Mammary epithelial cell (primary cell): ENCODE measurements at regions of chr11 and their contacts with region 1.

Region 1: GRCh38 chr11:85664615-85665481 is at the start of gene CREBZF:
- DNase-seq: peak; percentile 93
- H3K4me3 ChIP-seq: peak within 1 kb of the TSS; percentile 69 to 89 (median 88)
- H3K27ac ChIP-seq: peak within 1 kb of the TSS; percentile 93
- H3K4me1 ChIP-seq: peaks cover 2% of the 10 kb centered on the region
- H3K27me3 ChIP-seq: no peaks in the 10 kb centered on the region
- CTCF ChIP-seq: no peak
- total RNA-seq, gene CREBZF: 26.1 to 30.2 TPM

Region 2: DNA sequence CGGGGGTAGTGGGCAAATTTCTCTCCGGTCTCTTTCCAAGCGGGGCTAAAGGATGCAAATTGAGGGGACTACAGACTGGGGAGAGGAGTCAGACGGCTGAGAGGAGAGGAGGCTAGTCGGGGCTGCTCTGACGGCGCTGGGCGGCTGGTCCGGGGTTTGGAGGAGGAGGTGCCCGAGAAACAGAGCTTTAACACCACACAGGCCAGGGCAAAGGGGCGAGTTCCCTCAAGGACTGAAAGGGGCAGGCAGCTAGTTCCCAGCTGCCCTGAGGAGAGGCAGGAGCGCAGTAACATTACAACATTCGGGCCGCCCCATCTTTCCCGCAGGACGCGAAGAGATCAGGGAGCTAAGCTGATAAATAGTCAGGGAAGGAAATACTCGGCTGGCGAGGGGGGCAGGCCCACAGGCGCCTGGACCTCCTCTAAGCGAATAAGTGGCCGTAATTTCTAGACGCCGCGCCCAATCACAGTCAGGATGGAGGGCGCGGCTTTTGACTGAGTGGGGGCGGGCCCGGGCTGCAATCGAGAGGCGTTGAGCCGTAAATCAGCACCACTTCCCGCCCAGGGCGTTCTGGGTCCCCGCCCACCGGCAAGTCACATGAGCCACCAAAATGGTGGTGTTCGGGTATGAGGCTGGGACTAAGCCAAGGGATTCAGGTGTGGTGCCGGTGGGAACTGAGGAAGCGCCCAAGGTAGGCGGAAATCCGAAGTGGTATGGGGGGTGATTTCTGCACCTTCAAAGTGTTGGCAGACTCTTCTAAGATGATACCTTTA is 36.7 kb before region 1 on chr11 and contains the start of gene TMEM126B:
- CTCF ChIA-PET with region 1: no interaction called
- dilution Hi-C with region 1: no loop called
- in situ Hi-C with region 1: no loop called
- intact Hi-C with region 1: loop called (anchors 2 kb)
- DNase-seq: peak; percentile 98
- H3K4me3 ChIP-seq: peak within 1 kb of the TSS; percentile 66 to 91 (median 79)
- H3K27ac ChIP-seq: peak within 1 kb of the TSS; percentile 67
- H3K4me1 ChIP-seq: peaks cover 21% of the 10 kb centered on the region
- H3K27me3 ChIP-seq: no peaks in the 10 kb centered on the region
- CTCF ChIP-seq: no peak
- total RNA-seq, gene TMEM126B: 36.0 to 46.1 TPM

Region 3: GRCh38 chr11:85740481-85741400 is 75.9 kb after region 1 on chr11:
- CTCF ChIA-PET with region 1: no interaction called
- dilution Hi-C with region 1: no loop called
- in situ Hi-C with region 1: no loop called
- intact Hi-C with region 1: no loop called
- DNase-seq: no peak
- H3K4me3 ChIP-seq: no peak overlapping the region
- H3K27ac ChIP-seq: no peak overlapping the region
- H3K4me1 ChIP-seq: peaks cover 18% of the 10 kb centered on the region
- H3K27me3 ChIP-seq: no peaks in the 10 kb centered on the region
- CTCF ChIP-seq: no peak

Region 4: DNA sequence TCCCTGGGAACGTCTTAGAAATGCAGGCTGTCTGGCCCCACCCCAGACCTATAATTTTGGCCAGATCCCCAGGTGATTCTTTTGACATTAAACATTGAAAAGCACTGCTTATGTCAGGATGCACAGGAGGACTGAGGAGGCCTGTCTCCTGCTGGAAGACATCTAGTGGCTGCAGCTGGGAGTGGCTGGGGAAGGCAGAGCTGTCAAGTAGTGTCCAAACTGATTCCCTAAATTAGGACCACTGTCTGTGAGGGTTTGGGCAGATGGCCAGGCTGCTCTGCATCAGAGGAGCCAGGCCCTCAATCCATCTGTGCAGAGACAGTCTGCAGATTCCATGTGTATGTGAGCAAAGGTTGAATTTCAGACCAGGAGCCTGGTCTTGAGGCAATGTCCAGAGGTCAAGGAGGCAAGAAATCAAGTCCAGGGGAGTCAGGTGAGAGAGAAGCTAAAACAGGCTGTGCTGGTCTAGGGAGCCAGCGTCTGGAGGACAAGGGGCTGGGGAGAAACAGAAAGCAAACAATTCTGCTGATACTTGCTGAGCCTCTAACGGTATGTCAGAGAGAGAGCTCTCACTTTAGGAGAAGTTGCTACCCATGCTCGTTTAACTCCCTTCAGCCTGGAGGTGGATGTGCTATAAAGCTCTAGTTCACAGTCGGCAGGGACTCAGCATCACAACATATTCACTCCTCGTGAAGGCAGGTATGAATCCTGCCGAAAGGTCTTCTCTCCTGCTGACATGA is 161.4 kb after region 1 on chr11:
- CTCF ChIA-PET with region 1: no interaction called
- dilution Hi-C with region 1: no loop called
- in situ Hi-C with region 1: loop called in 1 of 2 experiments (anchors 10 kb)
- intact Hi-C with region 1: loop called (anchors 1 kb)
- DNase-seq: peak; percentile 41
- H3K4me3 ChIP-seq: no peak overlapping the region
- H3K27ac ChIP-seq: no peak overlapping the region
- H3K4me1 ChIP-seq: peaks cover 31% of the 10 kb centered on the region
- H3K27me3 ChIP-seq: no peaks in the 10 kb centered on the region
- CTCF ChIP-seq: peak; percentile 69 to 73